ENCODE measurements at regions of chr14 and their contacts with region 1.

Region 1: DNA sequence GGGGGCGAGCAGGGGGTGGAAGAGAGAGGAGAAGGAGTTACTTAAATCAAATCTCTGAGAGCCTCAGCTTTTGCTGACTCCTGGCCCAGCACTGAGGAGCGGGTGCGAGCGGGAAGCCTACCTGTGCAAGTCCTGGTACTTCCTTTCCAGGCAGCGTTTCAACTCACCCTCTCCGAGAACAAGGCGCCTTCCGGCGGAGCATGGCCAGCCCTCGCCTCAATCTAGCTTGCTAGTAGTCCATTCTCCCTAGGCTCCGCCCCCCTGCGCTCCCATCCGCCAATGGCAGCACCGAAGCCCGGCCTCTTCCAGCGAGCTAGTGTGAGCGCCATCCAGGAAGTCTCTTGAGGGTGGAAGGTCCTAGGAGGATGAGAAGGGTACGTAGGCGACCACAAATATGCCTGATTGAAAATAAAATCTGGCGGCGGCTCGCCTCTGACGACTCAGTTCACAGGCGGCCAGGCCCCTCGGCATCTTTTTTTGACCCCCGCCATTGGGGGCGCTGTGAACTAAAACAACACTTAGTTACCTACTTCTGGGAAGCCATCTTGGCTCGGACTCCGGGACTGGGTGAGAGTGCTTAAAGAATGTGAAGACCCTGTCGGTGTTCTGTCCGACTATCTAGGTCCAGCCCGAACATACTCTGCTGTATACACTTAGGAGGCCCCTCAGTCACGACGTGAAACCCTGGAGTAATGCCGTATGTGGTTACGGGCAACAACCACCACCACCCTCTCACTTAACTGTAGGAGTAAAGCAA is at the start of gene CHD8:
- DNase-seq: peak; percentile 99 to 100
- H3K4me3 ChIP-seq: peak within 1 kb of the TSS; percentile 75
- H3K4me3 Mint-ChIP-seq: peak within 1 kb of the TSS; percentile 95
- H3K27ac Mint-ChIP-seq: peak within 1 kb of the TSS; percentile 97
- H3K4me1 ChIP-seq: peaks cover 3% of the 10 kb centered on the region; the same call in 1 of the 2 replicates
- H3K4me1 Mint-ChIP-seq: peaks cover 10% of the 10 kb centered on the region
- H3K27me3 ChIP-seq: no peaks in the 10 kb centered on the region
- H3K27me3 Mint-ChIP-seq: no peaks in the 10 kb centered on the region
- CTCF ChIP-seq: peak; percentile 60 to 76
- total RNA-seq, gene CHD8: 84.9 and 89.8 TPM in 2 replicates

Region 2: GRCh38 chr14:20461274-20462001 is 994.7 kb before region 1 on chr14 and contains the start of gene PIP4P1:
- CTCF ChIA-PET with region 1: interaction called, 10 read pairs
- POLR2A ChIA-PET with region 1: no interaction called
- intact Hi-C with region 1: no loop called
- DNase-seq: peak; percentile 99 to 100
- H3K4me3 ChIP-seq: peak within 1 kb of the TSS; percentile 93
- H3K4me3 Mint-ChIP-seq: peak within 1 kb of the TSS; percentile 83
- H3K27ac Mint-ChIP-seq: peak within 1 kb of the TSS; percentile 96
- H3K4me1 ChIP-seq: peaks cover 16% of the 10 kb centered on the region
- H3K4me1 Mint-ChIP-seq: peaks cover 17% of the 10 kb centered on the region
- H3K27me3 ChIP-seq: no peaks in the 10 kb centered on the region
- H3K27me3 Mint-ChIP-seq: no peaks in the 10 kb centered on the region
- CTCF ChIP-seq: no peak
- total RNA-seq, gene PIP4P1: 39.6 and 46.2 TPM in 2 replicates

Region 3: GRCh38 chr14:21383848-21384493 is 72.1 kb before region 1 on chr14 and contains the start of gene SUPT16H:
- CTCF ChIA-PET with region 1: interaction called, 5 read pairs
- POLR2A ChIA-PET with region 1: interaction called, 4 read pairs
- intact Hi-C with region 1: loop called (anchors 1 kb)
- DNase-seq: peak; percentile 96 to 97
- H3K4me3 ChIP-seq: peak within 1 kb of the TSS; percentile 89
- H3K4me3 Mint-ChIP-seq: peak within 1 kb of the TSS; percentile 85
- H3K27ac Mint-ChIP-seq: peak within 1 kb of the TSS; percentile 95
- H3K4me1 ChIP-seq: peaks cover 10% of the 10 kb centered on the region
- H3K4me1 Mint-ChIP-seq: peaks cover 12% of the 10 kb centered on the region
- H3K27me3 ChIP-seq: no peaks in the 10 kb centered on the region
- H3K27me3 Mint-ChIP-seq: no peaks in the 10 kb centered on the region
- CTCF ChIP-seq: no peak
- total RNA-seq, gene SUPT16H: 114 and 118 TPM in 2 replicates

Region 4: GRCh38 chr14:21437063-21437901 is 18.8 kb before region 1 on chr14:
- CTCF ChIA-PET with region 1: interaction called, 17 read pairs
- POLR2A ChIA-PET with region 1: interaction called, 35 read pairs
- intact Hi-C with region 1: loop called (anchors 1 kb)
- DNase-seq: peak; percentile 99
- H3K4me3 ChIP-seq: peak overlapping the region; percentile 93
- H3K4me3 Mint-ChIP-seq: peak overlapping the region; percentile 96
- H3K27ac Mint-ChIP-seq: peak overlapping the region; percentile 94
- H3K4me1 ChIP-seq: peaks cover 10% of the 10 kb centered on the region
- H3K4me1 Mint-ChIP-seq: peaks cover 13% of the 10 kb centered on the region
- H3K27me3 ChIP-seq: no peaks in the 10 kb centered on the region
- H3K27me3 Mint-ChIP-seq: no peaks in the 10 kb centered on the region
- CTCF ChIP-seq: no peak

Region 5: GRCh38 chr14:21476925-21477681 is 21.0 kb after region 1 on chr14 and contains the starts of genes RAB2B and TOX4:
- CTCF ChIA-PET with region 1: interaction called, 16 read pairs
- POLR2A ChIA-PET with region 1: interaction called, 17 read pairs
- intact Hi-C with region 1: loop called (anchors 1 kb)
- DNase-seq: peak; percentile 97 to 98
- H3K4me3 ChIP-seq: peak within 1 kb of the TSS; percentile 97
- H3K4me3 Mint-ChIP-seq: peak within 1 kb of the TSS; percentile 97
- H3K27ac Mint-ChIP-seq: peak within 1 kb of the TSS; percentile 97
- H3K4me1 ChIP-seq: peaks cover 3% of the 10 kb centered on the region; the same call in 1 of the 2 replicates
- H3K4me1 Mint-ChIP-seq: no peaks in the 10 kb centered on the region
- H3K27me3 ChIP-seq: no peaks in the 10 kb centered on the region
- H3K27me3 Mint-ChIP-seq: no peaks in the 10 kb centered on the region
- CTCF ChIP-seq: peak; percentile 92 to 99
- total RNA-seq, gene RAB2B: 18.8 and 20.9 TPM in 2 replicates
- total RNA-seq, gene TOX4: 76.6 and 78.8 TPM in 2 replicates

Region 6: DNA sequence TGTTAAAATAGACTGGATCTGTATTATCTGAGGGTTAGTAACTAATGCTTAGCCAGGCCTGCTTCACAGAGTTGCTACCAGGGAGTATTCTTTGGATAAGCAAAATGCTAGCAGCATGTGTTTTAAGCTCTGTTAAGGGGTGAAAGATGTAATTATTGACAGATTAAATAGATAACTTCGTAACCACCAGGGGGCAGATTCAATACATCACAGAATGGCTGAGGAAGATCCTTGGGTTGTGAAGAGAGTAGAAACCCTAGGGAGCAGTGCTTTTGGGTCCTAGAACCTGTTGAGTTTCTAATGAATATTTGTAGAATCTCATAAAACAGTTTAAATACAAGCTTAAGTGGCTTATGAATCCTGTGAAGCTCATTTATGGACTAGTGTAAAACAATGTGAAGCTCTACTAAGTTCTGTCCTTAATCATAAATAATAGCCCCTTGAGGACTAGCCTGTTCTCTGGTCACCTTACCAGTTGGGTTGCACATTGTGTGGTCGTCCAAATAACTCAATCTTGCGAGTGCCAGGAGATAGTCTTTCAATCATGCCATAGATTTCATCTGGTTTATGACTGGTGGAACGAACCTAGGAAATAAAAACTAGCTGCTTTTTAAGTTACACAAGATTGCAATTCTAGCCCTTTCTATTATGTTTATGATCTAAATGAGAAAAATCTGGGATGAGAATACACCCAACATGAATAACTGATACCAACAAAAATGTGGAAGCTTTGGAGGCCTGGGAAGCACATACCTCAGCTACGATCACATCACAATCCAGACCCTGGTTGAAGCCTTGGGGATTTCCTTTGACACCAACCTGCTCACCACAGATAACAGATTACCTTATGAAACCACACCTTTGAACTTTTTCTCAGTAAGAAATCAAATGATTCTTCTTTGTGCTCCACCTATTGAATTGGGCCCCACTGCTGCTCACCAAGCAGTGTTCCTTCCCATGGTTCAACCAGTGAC is 42.8 kb after region 1 on chr14:
- CTCF ChIA-PET with region 1: interaction called, 3 read pairs
- POLR2A ChIA-PET with region 1: interaction called, 5 read pairs
- intact Hi-C with region 1: loop called (anchors 1 kb)
- DNase-seq: peak in 1 of 2 experiments; percentile 70
- H3K4me3 ChIP-seq: no peak overlapping the region
- H3K4me3 Mint-ChIP-seq: no peak overlapping the region
- H3K27ac Mint-ChIP-seq: peak overlapping the region; percentile 22
- H3K4me1 ChIP-seq: 0 out of 2 replicates have a peak, but pooled peaks cover 11% of the 10 kb centered on the region
- H3K4me1 Mint-ChIP-seq: peaks cover 25% of the 10 kb centered on the region
- H3K27me3 ChIP-seq: no peaks in the 10 kb centered on the region
- H3K27me3 Mint-ChIP-seq: no peaks in the 10 kb centered on the region
- CTCF ChIP-seq: peak; percentile 30

Region 7: DNA sequence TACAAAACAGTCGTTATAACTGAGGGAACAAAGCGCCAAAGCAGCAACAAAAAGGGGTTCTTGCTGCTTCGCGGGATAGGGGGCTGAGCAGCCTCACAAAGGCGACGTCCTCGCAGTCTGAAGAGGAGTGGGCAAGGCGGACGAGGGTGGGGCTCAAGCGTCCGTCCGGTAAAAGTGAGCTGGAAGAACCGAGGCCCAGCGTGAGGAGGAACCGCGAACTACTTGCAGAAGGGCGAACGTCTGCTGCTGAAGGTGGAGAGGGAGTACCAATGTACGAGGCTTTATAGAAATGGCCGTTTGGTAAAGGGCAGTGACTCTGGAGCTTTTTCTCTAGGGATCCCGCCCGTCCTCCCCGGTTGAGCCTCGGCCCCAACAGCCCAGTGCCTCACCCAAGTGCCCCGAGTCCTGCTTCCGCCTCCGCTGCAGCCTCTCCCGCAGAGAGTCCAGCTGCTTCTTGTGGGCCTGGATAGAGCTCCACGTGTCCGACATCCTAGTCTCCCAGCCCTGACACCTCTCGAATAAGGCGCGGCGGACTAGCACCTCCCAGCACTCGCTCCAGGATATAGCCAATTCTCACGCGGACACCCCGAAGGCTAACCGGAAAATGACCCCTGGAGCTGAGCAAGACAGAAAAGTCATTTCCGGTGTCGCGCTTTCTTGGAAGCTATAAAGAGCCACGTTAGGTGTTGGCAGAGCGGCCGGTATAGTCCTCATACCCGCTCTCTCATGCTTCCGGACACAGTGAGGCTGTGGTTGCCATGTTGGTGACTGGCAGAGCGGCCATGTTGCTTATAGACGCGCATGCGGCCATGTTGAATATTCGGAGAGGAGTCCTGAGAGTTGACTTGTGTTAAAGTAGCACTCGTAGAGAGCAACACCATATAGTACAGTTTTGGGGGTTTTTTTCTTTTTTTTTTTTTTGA is 54.9 kb after region 1 on chr14 and contains the start of gene METTL3:
- CTCF ChIA-PET with region 1: interaction called, 8 read pairs
- POLR2A ChIA-PET with region 1: interaction called, 12 read pairs
- intact Hi-C with region 1: loop called (anchors 1 kb)
- DNase-seq: peak; percentile 94 to 98
- H3K4me3 ChIP-seq: peak within 1 kb of the TSS; percentile 89
- H3K4me3 Mint-ChIP-seq: peak within 1 kb of the TSS; percentile 96
- H3K27ac Mint-ChIP-seq: peak within 1 kb of the TSS; percentile 97
- H3K4me1 ChIP-seq: no peaks in the 10 kb centered on the region
- H3K4me1 Mint-ChIP-seq: peaks cover 8% of the 10 kb centered on the region
- H3K27me3 ChIP-seq: no peaks in the 10 kb centered on the region
- H3K27me3 Mint-ChIP-seq: no peaks in the 10 kb centered on the region
- CTCF ChIP-seq: no peak
- total RNA-seq, gene METTL3: 40.1 and 43.8 TPM in 2 replicates

Measured in Caco-2 (cell line).